ENCODE measurements at regions of chr1 and their contacts with region 1.

Region 1: GRCh38 chr1:101128211-101128727 is 102.7 kb upstream of the DPH5 start:
- DNase-seq: no peak
- H3K4me3 ChIP-seq: no peak overlapping the region
- H3K27ac ChIP-seq: no peak overlapping the region
- H3K4me1 ChIP-seq: no peaks in the 10 kb centered on the region
- H3K27me3 ChIP-seq: no peaks in the 10 kb centered on the region
- CTCF ChIP-seq: no peak
- EP300 ChIP-seq: no peak
- POLR2A ChIP-seq: no peak

Region 2: GRCh38 chr1:100414693-100415497 is 713.4 kb before region 1 on chr1:
- intact Hi-C with region 1: loop called in 1 of 4 experiments (anchors 5 kb)
- DNase-seq: no peak
- H3K4me3 ChIP-seq: no peak overlapping the region
- H3K27ac ChIP-seq: no peak overlapping the region
- H3K4me1 ChIP-seq: peaks cover 1% of the 10 kb centered on the region
- H3K27me3 ChIP-seq: no peaks in the 10 kb centered on the region
- CTCF ChIP-seq: no peak
- EP300 ChIP-seq: no peak
- POLR2A ChIP-seq: no peak

Region 3: GRCh38 chr1:101112051-101112780 is 16.1 kb before region 1 on chr1:
- intact Hi-C with region 1: no loop called
- DNase-seq: no peak
- H3K4me3 ChIP-seq: no peak overlapping the region
- H3K27ac ChIP-seq: no peak overlapping the region
- H3K4me1 ChIP-seq: no peaks in the 10 kb centered on the region
- H3K27me3 ChIP-seq: no peaks in the 10 kb centered on the region
- CTCF ChIP-seq: no peak
- EP300 ChIP-seq: no peak
- POLR2A ChIP-seq: no peak

Region 4: DNA sequence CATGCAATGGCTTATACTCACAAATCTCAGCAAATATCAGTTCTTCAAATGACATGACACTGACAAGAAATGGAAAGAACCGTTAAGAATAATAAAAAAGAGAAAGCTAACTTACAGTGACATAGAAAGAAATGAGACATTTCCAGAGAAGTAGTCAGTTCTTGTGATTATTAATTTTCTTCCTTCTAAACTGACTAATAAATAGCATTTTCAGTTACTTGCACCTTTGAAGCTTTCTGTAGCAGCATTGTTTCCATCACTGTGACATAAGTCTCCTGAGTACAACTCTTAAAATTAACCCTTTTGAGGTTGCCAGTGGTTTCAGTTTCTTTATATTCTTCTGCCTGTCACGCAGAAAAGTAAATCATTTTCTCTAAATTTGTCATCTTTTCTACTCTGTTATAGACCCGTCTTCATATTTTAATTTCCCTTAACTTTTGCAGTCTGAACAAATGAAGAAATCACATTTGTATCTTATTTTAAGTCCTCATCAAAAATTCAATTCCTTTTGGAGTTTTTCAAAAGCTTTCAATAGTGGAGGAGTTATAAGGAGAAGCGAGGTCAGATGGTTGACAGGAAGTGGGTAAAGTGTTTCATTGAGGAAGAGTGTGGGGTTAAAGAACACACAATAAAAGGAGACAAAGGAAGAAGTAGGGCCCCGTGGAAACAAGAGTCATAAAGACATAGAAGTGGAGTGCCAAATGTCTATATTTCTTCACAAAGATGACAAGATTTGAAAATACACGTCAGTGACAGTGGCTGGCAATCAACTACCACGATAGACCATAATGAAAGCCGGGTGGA is 50.6 kb after region 1 on chr1:
- intact Hi-C with region 1: no loop called
- DNase-seq: no peak
- H3K4me3 ChIP-seq: no peak overlapping the region
- H3K27ac ChIP-seq: no peak overlapping the region
- H3K4me1 ChIP-seq: no peaks in the 10 kb centered on the region
- H3K27me3 ChIP-seq: no peaks in the 10 kb centered on the region
- CTCF ChIP-seq: no peak
- EP300 ChIP-seq: no peak
- POLR2A ChIP-seq: no peak